Esophagus muscularis mucosa (tissue), 4 donors: ENCODE measurements at regions of chr12 and their contacts with region 1.

Region 1: GRCh38 chr12:10728091-10728490 is 5.0 kb upstream of the YBX3 start:
- DNase-seq: no peak
- H3K4me3 ChIP-seq: no peak overlapping the region
- H3K27ac ChIP-seq: no peak overlapping the region
- H3K4me1 ChIP-seq: peaks cover 0 to 11% (median 9%) of the 10 kb centered on the region in 4 donors
- H3K27me3 ChIP-seq: peaks cover 0 to 6% (median 0%) of the 10 kb centered on the region in 4 donors
- CTCF ChIP-seq: no peak
- EP300 ChIP-seq: no peak
- POLR2A ChIP-seq: no peak

Region 2: DNA sequence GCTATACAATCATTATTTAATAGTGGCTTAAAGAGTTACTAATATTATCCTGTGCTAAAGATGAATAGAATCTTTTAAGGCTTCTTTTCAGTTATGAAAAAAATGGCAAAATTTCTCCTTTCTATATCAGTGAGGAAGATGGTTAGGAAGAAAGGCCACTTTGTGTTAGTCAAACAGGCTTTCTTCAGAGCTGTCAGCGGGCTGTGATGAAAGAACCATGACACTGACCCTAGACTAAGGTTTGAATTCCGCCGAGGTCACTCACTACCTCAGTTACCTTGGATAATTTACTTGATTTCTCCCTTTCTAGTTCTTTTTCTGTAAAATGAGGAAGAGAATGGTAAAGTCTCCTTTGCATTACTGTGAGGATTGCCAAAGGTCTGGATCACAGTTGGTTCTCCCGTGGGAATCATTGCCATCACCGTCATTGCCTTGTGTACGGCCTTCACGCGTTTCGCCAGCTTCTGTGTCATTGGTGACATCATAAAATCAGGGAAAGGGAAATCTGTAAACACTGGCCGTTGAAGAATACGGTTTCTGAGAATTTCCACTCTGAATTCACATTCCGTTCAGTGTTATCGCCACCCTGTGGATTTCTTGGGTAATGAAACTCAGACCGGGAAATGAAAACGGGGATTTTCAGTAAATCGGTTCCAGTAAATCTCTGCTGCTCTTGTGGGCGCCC is 21.8 kb after region 1 on chr12:
- intact Hi-C with region 1: loop called (anchors 2 kb)
- DNase-seq: peak; percentile 95
- H3K4me3 ChIP-seq: peak overlapping the region; percentile 34 to 51 (median 44)
- H3K27ac ChIP-seq: peak overlapping the region; percentile 41 to 73 (median 66)
- H3K4me1 ChIP-seq: peaks cover 4 to 11% (median 8%) of the 10 kb centered on the region in 4 donors
- H3K27me3 ChIP-seq: peaks cover 0 to 11% (median 0%) of the 10 kb centered on the region in 4 donors
- CTCF ChIP-seq: peak; percentile 95 to 97 (median 96)
- EP300 ChIP-seq: peak; percentile 83
- POLR2A ChIP-seq: no peak

Region 3: DNA sequence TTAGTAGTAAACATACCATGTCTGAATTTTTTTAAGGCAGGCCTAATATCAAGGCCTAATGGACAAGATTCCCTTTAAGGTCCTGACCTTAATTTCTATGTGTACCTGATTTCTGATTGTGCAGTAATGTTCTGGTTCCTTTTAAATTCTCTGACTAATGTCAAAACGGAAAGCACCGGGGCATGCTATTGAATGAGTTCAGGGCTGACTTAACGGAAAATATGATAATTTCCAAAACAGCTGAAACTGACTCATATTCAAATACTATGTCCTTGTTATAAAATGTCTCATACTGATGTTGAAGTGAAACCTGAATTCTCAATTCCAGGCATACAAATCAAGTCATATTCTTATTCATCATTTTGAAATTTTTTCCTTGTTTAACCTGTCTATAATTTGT is 357.3 kb after region 1 on chr12:
- intact Hi-C with region 1: no loop called
- DNase-seq: no peak
- H3K4me3 ChIP-seq: no peak overlapping the region
- H3K27ac ChIP-seq: no peak overlapping the region
- H3K4me1 ChIP-seq: no peaks in the 10 kb centered on the region
- H3K27me3 ChIP-seq: no peaks in the 10 kb centered on the region
- CTCF ChIP-seq: no peak
- EP300 ChIP-seq: no peak
- POLR2A ChIP-seq: no peak